ENCODE measurements at regions of chr12 and their contacts with region 1.

Region 1: GRCh38 chr12:104381731-104382480 is 74.8 kb upstream of the CHST11 start:
- DNase-seq: peak; percentile 85
- ATAC-seq: peak; percentile 94

Region 2: DNA sequence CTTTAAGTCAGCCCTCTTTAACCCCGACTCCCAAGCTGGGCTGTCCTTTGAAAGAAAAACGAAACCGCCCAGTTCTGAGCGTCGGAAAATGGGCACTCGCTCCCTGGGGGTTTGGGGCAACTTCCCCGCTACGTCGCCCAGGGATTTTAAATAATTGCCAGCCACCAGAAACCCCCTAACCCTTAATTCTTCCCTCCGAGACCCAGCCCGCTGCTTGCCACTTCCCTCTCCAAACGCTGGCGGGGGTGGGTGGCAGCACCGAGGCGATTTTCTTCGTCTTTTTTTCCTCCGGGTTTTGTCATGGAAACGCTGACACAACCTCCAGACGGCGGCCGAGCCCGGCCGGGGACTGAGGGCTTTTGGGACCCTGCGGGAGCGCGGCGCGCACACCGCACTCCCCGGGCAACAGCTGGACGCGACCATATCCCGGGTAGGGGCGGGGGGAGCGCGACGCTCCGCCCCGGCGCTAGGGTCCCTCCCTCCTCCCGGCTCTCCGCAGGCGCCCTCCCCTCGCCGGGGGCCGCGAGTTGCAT is 74.6 kb after region 1 on chr12 and contains the start of gene CHST11:
- intact Hi-C with region 1: loop called (anchors 5 kb)
- DNase-seq: peak; percentile 90
- ATAC-seq: peak; percentile 94
- total RNA-seq, gene CHST11: 3.0 TPM

Region 3: GRCh38 chr12:104671407-104672098 is 289.6 kb after region 1 on chr12:
- intact Hi-C with region 1: loop called (anchors 10 kb)
- DNase-seq: peak; percentile 88
- ATAC-seq: peak; percentile 38

Region 4: GRCh38 chr12:104877123-104877705 is 495.3 kb after region 1 on chr12:
- intact Hi-C with region 1: loop called (anchors 2 kb)
- DNase-seq: peak; percentile 51
- ATAC-seq: peak; percentile 86